Transverse colon (tissue), 4 donors: ENCODE measurements at regions of chr7 and their contacts with region 1.

Region 1: GRCh38 chr7:50467817-50468610 is 17.9 kb upstream of the FIGNL1 start:
- DNase-seq: peak; percentile 83
- H3K4me3 ChIP-seq: peak overlapping the region in 1 of 4 donors; percentile 22
- H3K27ac ChIP-seq: no peak overlapping the region
- H3K4me1 ChIP-seq: peaks cover 0 to 6% (median 6%) of the 10 kb centered on the region in 4 donors
- H3K27me3 ChIP-seq: no peaks in the 10 kb centered on the region
- CTCF ChIP-seq: peak; percentile 85 to 90 (median 88)
- EP300 ChIP-seq: no peak
- POLR2A ChIP-seq: no peak

Region 2: GRCh38 chr7:50564640-50565558 is 96.9 kb after region 1 on chr7 and contains the start of gene DDC:
- in situ Hi-C with region 1: no loop called
- intact Hi-C with region 1: no loop called
- DNase-seq: peak; percentile 26
- H3K4me3 ChIP-seq: peak within 1 kb of the TSS in 3 of 4 donors; percentile 2 to 29 (median 22)
- H3K27ac ChIP-seq: peak within 1 kb of the TSS; percentile 52 to 81 (median 68)
- H3K4me1 ChIP-seq: peaks cover 0 to 17% (median 5%) of the 10 kb centered on the region in 4 donors
- H3K27me3 ChIP-seq: no peaks in the 10 kb centered on the region
- CTCF ChIP-seq: no peak
- EP300 ChIP-seq: no peak
- POLR2A ChIP-seq: no peak
- total RNA-seq, gene DDC: 16.1 to 71.3 (median 42.5) TPM

Region 3: GRCh38 chr7:50610521-50611277 is 142.7 kb after region 1 on chr7:
- in situ Hi-C with region 1: loop called in 1 of 4 experiments (anchors 25 kb)
- intact Hi-C with region 1: no loop called
- DNase-seq: no peak
- H3K4me3 ChIP-seq: no peak overlapping the region
- H3K27ac ChIP-seq: no peak overlapping the region
- H3K4me1 ChIP-seq: peaks cover 0 to 9% (median 5%) of the 10 kb centered on the region in 4 donors
- H3K27me3 ChIP-seq: no peaks in the 10 kb centered on the region
- CTCF ChIP-seq: no peak
- EP300 ChIP-seq: no peak
- POLR2A ChIP-seq: no peak

Region 4: DNA sequence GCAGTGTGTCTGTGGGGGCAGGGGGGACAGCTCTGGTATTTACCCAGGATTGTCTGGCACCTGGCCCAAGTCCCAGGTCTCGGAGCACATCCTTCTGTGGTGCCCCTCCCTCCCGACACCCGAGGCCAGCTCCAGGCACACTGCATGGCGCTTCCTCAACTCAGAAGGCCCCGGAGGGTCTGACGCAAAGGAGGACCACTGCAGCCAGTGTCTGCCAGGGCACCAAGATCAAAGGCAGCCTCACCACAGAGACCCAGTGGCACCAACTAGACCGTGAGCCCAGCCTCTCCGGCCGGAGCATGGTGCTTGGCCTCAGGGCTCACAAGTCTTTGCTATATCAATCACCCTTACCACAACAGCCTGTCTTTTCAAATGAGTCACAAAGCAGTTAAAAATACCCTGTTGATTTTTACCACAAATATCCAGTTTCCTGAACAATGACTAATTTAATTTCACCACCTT is 196.5 kb after region 1 on chr7:
- in situ Hi-C with region 1: loop called in 1 of 4 experiments (anchors 25 kb)
- intact Hi-C with region 1: no loop called
- DNase-seq: no peak
- H3K4me3 ChIP-seq: no peak overlapping the region
- H3K27ac ChIP-seq: no peak overlapping the region
- H3K4me1 ChIP-seq: peaks cover 4 to 35% (median 14%) of the 10 kb centered on the region in 4 donors
- H3K27me3 ChIP-seq: no peaks in the 10 kb centered on the region
- CTCF ChIP-seq: no peak
- EP300 ChIP-seq: no peak
- POLR2A ChIP-seq: no peak

Region 5: GRCh38 chr7:51067757-51068156 is 599.7 kb after region 1 on chr7:
- in situ Hi-C with region 1: loop called in 1 of 4 experiments (anchors 25 kb)
- intact Hi-C with region 1: no loop called
- DNase-seq: peak; percentile 67
- H3K4me3 ChIP-seq: no peak overlapping the region
- H3K27ac ChIP-seq: no peak overlapping the region
- H3K4me1 ChIP-seq: peaks cover 0 to 11% (median 0%) of the 10 kb centered on the region in 4 donors
- H3K27me3 ChIP-seq: no peaks in the 10 kb centered on the region
- CTCF ChIP-seq: peak; percentile 64 to 73 (median 69)
- EP300 ChIP-seq: no peak
- POLR2A ChIP-seq: no peak

Region 6: GRCh38 chr7:51162724-51163329 is 694.8 kb after region 1 on chr7:
- in situ Hi-C with region 1: loop called in 2 of 4 experiments (anchors 10 to 25 kb)
- intact Hi-C with region 1: loop called (anchors 5 kb)
- DNase-seq: peak; percentile 77
- H3K4me3 ChIP-seq: no peak overlapping the region
- H3K27ac ChIP-seq: no peak overlapping the region
- H3K4me1 ChIP-seq: peaks cover 0 to 10% (median 0%) of the 10 kb centered on the region in 4 donors
- H3K27me3 ChIP-seq: no peaks in the 10 kb centered on the region
- CTCF ChIP-seq: peak; percentile 70 to 83 (median 76)
- EP300 ChIP-seq: no peak
- POLR2A ChIP-seq: no peak